Gastrocnemius medialis (tissue), 4 donors: ENCODE measurements at regions of chr10 and their contacts with region 1.

Region 1: GRCh38 chr10:30783939-30784500 is 154.5 kb upstream of the LYZL2 start:
- DNase-seq: peak; percentile 77 to 81
- ATAC-seq: peak; percentile 68 to 80
- H3K4me3 ChIP-seq: peak overlapping the region; percentile 55 to 91 (median 77)
- H3K27ac ChIP-seq: peak overlapping the region; percentile 82 to 90 (median 87)
- H3K4me1 ChIP-seq: peaks cover 3 to 12% of the 10 kb centered on the region in 2 donors
- H3K27me3 ChIP-seq: no peaks in the 10 kb centered on the region
- CTCF ChIP-seq: peak; percentile 82 to 92 (median 91)
- POLR2A ChIP-seq: no peak

Region 2: DNA sequence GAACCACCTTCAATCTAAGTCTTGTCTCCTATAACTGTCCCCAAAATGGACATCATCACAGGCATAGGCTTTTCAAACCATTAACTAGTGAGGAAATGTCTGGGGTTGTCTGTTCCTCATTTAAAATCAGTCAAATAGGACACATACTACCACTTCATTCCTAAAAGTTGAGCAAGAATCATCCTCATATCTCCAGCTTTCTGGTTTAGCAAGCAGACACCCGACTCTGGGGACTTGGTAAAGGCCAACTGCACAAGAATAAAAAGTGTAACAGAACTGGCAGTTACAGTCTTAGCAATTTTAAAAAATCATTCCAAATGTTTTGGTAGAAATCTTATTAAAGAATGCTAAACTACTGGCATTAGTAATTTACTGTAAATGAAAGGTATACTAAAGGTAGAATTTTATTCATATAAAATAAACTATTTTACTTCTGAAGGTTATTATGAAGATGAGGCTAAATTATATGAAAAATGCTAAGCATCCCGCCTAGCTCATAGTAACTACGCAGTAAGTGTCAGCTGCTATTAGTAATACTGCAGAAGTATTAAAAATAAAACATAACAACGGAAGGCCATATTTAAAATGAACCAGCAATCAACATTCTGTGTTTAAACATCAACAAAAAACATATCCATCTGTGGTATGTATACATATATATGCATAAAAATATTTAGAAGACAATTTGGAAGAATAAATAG is 186.9 kb after region 1 on chr10:
- in situ Hi-C with region 1: no loop called
- intact Hi-C with region 1: loop called (anchors 5 kb)
- DNase-seq: peak in 1 of 2 donors; percentile 63
- ATAC-seq: peak; percentile 16 to 47
- H3K4me3 ChIP-seq: peak overlapping the region in 2 of 4 donors; percentile 10 to 17
- H3K27ac ChIP-seq: peak overlapping the region; percentile 84 to 93 (median 89)
- H3K4me1 ChIP-seq: peaks cover 52 to 54% of the 10 kb centered on the region in 2 donors
- H3K27me3 ChIP-seq: no peaks in the 10 kb centered on the region
- CTCF ChIP-seq: no peak
- POLR2A ChIP-seq: no peak

Region 3: GRCh38 chr10:31133628-31134302 is 349.7 kb after region 1 on chr10:
- in situ Hi-C with region 1: no loop called
- intact Hi-C with region 1: loop called (anchors 2 kb)
- DNase-seq: peak; percentile 58 to 76
- ATAC-seq: peak; percentile 82 to 88
- H3K4me3 ChIP-seq: peak overlapping the region; percentile 63 to 94 (median 68)
- H3K27ac ChIP-seq: peak overlapping the region; percentile 90 to 94 (median 93)
- H3K4me1 ChIP-seq: peaks cover 4 to 13% of the 10 kb centered on the region in 2 donors
- H3K27me3 ChIP-seq: no peaks in the 10 kb centered on the region
- CTCF ChIP-seq: no peak
- POLR2A ChIP-seq: peak; percentile 74

Region 4: DNA sequence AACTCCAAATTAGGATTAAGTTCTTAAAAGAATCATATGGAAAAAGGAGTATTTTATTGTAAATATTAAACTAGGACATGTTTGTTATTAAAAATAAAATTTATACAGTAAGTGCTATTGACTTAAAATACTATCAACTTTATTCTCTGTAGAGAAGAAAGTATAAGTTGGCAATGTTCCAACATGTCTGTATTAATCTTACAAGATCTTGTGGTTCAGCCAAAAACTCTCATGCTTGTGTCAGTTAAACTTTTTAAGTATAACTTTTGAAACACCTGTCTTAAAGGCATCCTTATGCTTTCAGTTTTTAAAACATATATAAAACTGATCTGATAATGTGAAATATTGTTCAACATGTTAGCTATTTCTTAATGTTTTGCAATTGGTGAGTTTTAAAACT is 695.7 kb after region 1 on chr10:
- in situ Hi-C with region 1: loop called in 2 of 4 experiments (anchors 10 to 25 kb)
- intact Hi-C with region 1: no loop called
- DNase-seq: no peak
- ATAC-seq: no peak
- H3K4me3 ChIP-seq: no peak overlapping the region
- H3K27ac ChIP-seq: no peak overlapping the region
- H3K4me1 ChIP-seq: peaks cover 0 to 8% of the 10 kb centered on the region in 2 donors
- H3K27me3 ChIP-seq: no peaks in the 10 kb centered on the region
- CTCF ChIP-seq: no peak
- POLR2A ChIP-seq: no peak

Region 5: GRCh38 chr10:31603235-31604087 is 819.4 kb after region 1 on chr10:
- in situ Hi-C with region 1: no loop called
- intact Hi-C with region 1: loop called (anchors 10 kb)
- DNase-seq: peak; percentile 95 to 97
- ATAC-seq: peak; percentile 75
- H3K4me3 ChIP-seq: peak overlapping the region; percentile 68 to 97 (median 76)
- H3K27ac ChIP-seq: peak overlapping the region; percentile 92 to 99 (median 96)
- H3K4me1 ChIP-seq: peaks cover 14 to 19% of the 10 kb centered on the region in 2 donors
- H3K27me3 ChIP-seq: no peaks in the 10 kb centered on the region
- CTCF ChIP-seq: peak in 3 of 5 experiments; percentile 13 to 34 (median 23)
- POLR2A ChIP-seq: peak; percentile 85 to 86

Region 6: GRCh38 chr10:31808258-31809218 is 1024.5 kb after region 1 on chr10:
- in situ Hi-C with region 1: loop called in 1 of 4 experiments (anchors 10 kb)
- intact Hi-C with region 1: loop called (anchors 2 kb)
- DNase-seq: peak; percentile 24 to 57
- ATAC-seq: peak; percentile 91
- H3K4me3 ChIP-seq: peak overlapping the region; percentile 45 to 60 (median 53)
- H3K27ac ChIP-seq: peak overlapping the region; percentile 85 to 92 (median 89)
- H3K4me1 ChIP-seq: peaks cover 21 to 32% of the 10 kb centered on the region in 2 donors
- H3K27me3 ChIP-seq: no peaks in the 10 kb centered on the region
- CTCF ChIP-seq: peak; percentile 58 to 82 (median 75)
- POLR2A ChIP-seq: peak in 1 of 2 donors; percentile 25